ENCODE measurements at regions of chr6 and their contacts with region 1.

Region 1: DNA sequence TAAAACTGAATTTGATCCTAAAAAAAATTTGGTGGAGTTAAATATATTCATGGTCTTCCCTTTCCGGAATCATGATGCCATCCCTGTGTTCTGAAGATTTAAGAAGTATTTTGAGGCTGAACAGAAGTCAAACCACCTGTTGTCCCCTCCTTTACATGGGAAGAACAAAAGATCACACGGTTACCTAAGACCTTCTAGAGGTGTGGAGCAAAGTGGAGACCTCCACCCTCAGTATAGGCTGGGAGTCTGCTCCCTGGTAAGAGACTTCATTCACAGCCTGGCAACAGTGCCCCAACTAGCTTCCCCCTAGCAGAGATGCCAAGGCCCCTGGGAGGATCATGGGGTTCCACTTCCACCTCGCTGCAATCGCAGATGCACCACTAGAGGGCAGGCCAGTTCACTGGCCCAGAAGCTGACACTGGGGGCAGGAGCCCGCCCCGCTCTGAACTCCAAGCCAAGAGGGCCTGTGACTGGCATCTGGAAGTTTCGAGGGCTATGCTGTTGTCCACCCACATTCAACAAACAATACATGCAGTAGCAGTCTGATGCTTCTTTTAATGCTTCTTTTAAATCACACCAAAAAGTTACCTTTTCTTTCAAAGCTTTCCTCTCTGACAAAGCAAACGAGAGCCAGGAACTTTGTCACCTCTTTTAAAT is 19.5 kb upstream of the UBE2J1 start:
- DNase-seq: peak; percentile 67 to 88 (median 81)
- ATAC-seq: peak; percentile 59
- H3K4me3 ChIP-seq: no peak overlapping the region
- H3K4me3 Mint-ChIP-seq: no peak overlapping the region
- H3K27ac ChIP-seq: no peak overlapping the region
- H3K27ac Mint-ChIP-seq: peak overlapping the region; percentile 72
- H3K4me1 ChIP-seq: peaks cover 21% of the 10 kb centered on the region
- H3K4me1 Mint-ChIP-seq: peaks cover 28% of the 10 kb centered on the region
- H3K27me3 ChIP-seq: peaks cover 0 to 2% of the 10 kb centered on the region in 2 experiments
- H3K27me3 Mint-ChIP-seq: no peaks in the 10 kb centered on the region
- CTCF ChIP-seq: peak; percentile 91

Region 2: DNA sequence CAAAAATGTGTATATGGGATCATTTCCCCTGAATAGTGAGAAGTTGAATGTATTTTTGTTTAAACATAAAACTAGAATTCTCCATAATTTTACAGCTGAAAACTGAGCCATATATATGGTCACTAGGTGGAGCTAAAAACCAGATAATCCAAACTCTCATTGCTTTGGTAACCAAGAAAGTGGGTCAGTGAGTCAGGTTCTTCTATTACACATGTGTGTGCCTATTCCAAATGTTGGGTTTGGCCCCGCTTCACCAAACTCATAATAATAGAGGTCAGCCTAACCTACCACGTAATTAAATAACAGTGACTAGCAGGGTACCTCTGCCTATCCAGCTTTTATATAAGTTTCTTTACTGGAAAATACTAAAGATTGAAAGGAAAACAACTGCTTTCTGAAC is 389.3 kb before region 1 on chr6:
- CTCF ChIA-PET with region 1: interaction called, 26 read pairs
- POLR2A ChIA-PET with region 1: no interaction called
- intact Hi-C with region 1: loop called (anchors 2 to 5 kb)
- DNase-seq: peak in 3 of 9 experiments; percentile 22 to 78 (median 70)
- ATAC-seq: peak; percentile 86
- H3K4me3 ChIP-seq: no peak overlapping the region
- H3K4me3 Mint-ChIP-seq: no peak overlapping the region
- H3K27ac ChIP-seq: no peak overlapping the region
- H3K27ac Mint-ChIP-seq: no peak overlapping the region
- H3K4me1 ChIP-seq: no peaks in the 10 kb centered on the region
- H3K4me1 Mint-ChIP-seq: no peaks in the 10 kb centered on the region
- H3K27me3 ChIP-seq: no peaks in the 10 kb centered on the region
- H3K27me3 Mint-ChIP-seq: peaks cover 2% of the 10 kb centered on the region
- CTCF ChIP-seq: peak; percentile 84

Region 3: DNA sequence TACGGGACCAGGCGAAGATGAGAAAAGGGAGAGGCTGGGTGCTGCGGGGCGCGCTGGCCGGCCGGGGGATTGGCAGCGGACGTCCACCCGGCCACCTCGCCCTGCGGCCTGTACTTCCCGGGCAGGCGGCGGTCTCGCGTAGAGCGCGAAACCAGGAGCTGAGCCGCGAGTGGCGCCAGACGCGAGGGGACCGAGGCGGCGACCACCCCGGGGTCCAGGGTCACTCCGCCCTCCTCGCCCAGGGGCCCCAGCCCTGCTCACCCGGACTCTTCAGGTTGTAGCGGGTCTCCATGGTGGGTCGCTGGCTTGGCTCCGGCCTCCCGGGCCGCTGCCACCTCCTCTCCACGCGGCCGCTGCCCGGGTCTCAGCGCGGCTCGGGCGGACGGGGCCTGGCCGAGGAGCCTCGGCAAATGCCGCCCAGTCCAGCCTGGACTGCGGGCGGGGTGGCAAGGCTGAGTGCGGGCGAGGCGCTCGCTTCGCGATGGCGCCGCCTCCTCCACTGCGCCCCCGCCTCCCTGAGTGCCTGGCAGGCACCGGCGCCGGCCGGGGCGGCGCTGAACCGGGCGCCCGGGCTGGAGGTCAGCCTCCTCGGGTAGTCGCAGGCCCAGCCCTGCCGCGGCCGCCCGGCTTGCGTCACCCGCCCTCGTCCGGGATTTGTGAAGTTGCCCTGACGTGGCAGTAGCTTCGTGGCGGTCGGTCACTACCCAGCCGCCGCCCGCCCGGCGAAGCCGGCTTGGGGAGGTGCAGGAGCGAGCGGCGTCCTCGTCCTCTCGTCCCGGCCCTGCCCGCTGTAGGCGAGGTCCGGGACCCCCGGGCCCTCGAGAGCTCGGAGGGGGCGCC is 19.5 kb before region 1 on chr6 and contains the start of gene UBE2J1:
- CTCF ChIA-PET with region 1: interaction called, 68 read pairs
- POLR2A ChIA-PET with region 1: interaction called, 7 read pairs
- intact Hi-C with region 1: loop called (anchors 2 kb)
- DNase-seq: peak; percentile 48 to 87 (median 71)
- ATAC-seq: peak; percentile 81
- H3K4me3 ChIP-seq: peak within 1 kb of the TSS; percentile 58 to 67
- H3K4me3 Mint-ChIP-seq: peak within 1 kb of the TSS; percentile 97
- H3K27ac ChIP-seq: peak within 1 kb of the TSS; percentile 74 to 77
- H3K27ac Mint-ChIP-seq: peak within 1 kb of the TSS; percentile 97
- H3K4me1 ChIP-seq: peaks cover 42% of the 10 kb centered on the region
- H3K4me1 Mint-ChIP-seq: peaks cover 69% of the 10 kb centered on the region
- H3K27me3 ChIP-seq: no peaks in the 10 kb centered on the region
- H3K27me3 Mint-ChIP-seq: no peaks in the 10 kb centered on the region
- CTCF ChIP-seq: no peak
- total RNA-seq, gene UBE2J1: 34.1 to 37.5 TPM

Region 4: DNA sequence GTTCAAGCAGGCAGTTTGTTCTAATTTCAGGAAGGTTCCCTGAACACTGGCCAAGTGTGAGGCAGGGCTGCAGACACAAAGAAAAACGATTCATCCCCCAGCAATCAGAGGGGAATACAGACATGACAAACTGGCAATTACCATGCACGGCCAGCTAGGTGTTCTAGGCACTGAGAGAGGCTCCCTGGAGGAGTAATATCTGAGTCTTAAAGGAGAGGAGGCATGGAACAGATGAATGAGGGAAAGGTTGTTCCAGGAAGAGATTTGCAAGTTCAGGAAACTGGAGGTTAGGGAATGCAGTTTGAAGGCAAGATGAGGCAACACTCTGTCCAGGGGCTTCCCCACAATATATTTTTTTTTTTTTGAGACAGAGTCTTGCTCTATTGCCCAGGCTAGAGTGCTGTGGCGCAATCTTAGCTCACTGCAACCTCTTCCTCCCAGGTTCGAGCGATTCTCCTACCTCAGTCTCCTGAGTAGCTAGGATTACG is 29.0 kb after region 1 on chr6:
- CTCF ChIA-PET with region 1: interaction called, 15 read pairs
- POLR2A ChIA-PET with region 1: no interaction called
- intact Hi-C with region 1: no loop called
- DNase-seq: no peak
- ATAC-seq: no peak
- H3K4me3 ChIP-seq: no peak overlapping the region
- H3K4me3 Mint-ChIP-seq: no peak overlapping the region
- H3K27ac ChIP-seq: no peak overlapping the region
- H3K27ac Mint-ChIP-seq: no peak overlapping the region
- H3K4me1 ChIP-seq: no peaks in the 10 kb centered on the region
- H3K4me1 Mint-ChIP-seq: no peaks in the 10 kb centered on the region
- H3K27me3 ChIP-seq: no peaks in the 10 kb centered on the region
- H3K27me3 Mint-ChIP-seq: peaks cover 4% of the 10 kb centered on the region
- CTCF ChIP-seq: no peak

Region 5: DNA sequence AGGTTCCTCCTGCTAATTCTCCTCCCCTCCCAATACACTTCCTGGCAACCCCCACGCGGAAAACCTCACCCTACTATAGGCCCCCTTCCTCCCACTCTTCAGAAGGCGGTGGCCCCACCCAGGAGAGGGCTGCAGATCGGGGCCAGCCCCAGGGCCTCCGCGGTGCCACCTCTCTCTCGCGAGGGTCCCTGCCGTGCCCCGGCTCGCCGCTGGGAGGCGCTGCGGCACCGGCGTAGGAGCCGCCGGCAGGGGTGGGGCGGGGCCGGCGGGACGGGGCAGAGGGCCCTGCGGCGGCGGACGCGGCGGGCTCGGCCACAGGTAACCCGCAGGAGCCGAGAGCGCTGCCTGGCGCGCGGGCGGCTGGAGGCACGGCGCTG is 60.9 kb after region 1 on chr6 and contains the start of gene ANKRD6:
- CTCF ChIA-PET with region 1: interaction called, 19 read pairs
- POLR2A ChIA-PET with region 1: no interaction called
- intact Hi-C with region 1: loop called (anchors 5 kb)
- DNase-seq: peak; percentile 69 to 92 (median 82)
- ATAC-seq: peak; percentile 96
- H3K4me3 ChIP-seq: peak within 1 kb of the TSS; percentile 42 to 66
- H3K4me3 Mint-ChIP-seq: peak within 1 kb of the TSS; percentile 89
- H3K27ac ChIP-seq: peak within 1 kb of the TSS in 1 of 2 experiments; percentile 28
- H3K27ac Mint-ChIP-seq: peak within 1 kb of the TSS; percentile 82
- H3K4me1 ChIP-seq: peaks cover 7% of the 10 kb centered on the region
- H3K4me1 Mint-ChIP-seq: peaks cover 25% of the 10 kb centered on the region
- H3K27me3 ChIP-seq: no peaks in the 10 kb centered on the region
- H3K27me3 Mint-ChIP-seq: no peaks in the 10 kb centered on the region
- CTCF ChIP-seq: peak; percentile 78
- total RNA-seq, gene ANKRD6: 4.3 to 5.9 TPM

Measured in CD8-positive, alpha-beta T cell (primary cell).